CD8-positive, alpha-beta T cell (primary cell): ENCODE measurements at regions of chr19 and their contacts with region 1.

Region 1: GRCh38 chr19:14031719-14032480 is at the start of gene IL27RA:
- DNase-seq: peak; percentile 64 to 94 (median 87)
- ATAC-seq: peak; percentile 75
- H3K4me3 ChIP-seq: peak within 1 kb of the TSS; percentile 60 to 97
- H3K4me3 Mint-ChIP-seq: peak within 1 kb of the TSS; percentile 92
- H3K27ac ChIP-seq: peak within 1 kb of the TSS; percentile 80 to 95
- H3K27ac Mint-ChIP-seq: peak within 1 kb of the TSS; percentile 94
- H3K4me1 ChIP-seq: peaks cover 26% of the 10 kb centered on the region
- H3K4me1 Mint-ChIP-seq: peaks cover 32% of the 10 kb centered on the region
- H3K27me3 ChIP-seq: no peaks in the 10 kb centered on the region
- H3K27me3 Mint-ChIP-seq: no peaks in the 10 kb centered on the region
- CTCF ChIP-seq: peak; percentile 50
- total RNA-seq, gene IL27RA: 25.4 to 25.7 TPM

Region 2: DNA sequence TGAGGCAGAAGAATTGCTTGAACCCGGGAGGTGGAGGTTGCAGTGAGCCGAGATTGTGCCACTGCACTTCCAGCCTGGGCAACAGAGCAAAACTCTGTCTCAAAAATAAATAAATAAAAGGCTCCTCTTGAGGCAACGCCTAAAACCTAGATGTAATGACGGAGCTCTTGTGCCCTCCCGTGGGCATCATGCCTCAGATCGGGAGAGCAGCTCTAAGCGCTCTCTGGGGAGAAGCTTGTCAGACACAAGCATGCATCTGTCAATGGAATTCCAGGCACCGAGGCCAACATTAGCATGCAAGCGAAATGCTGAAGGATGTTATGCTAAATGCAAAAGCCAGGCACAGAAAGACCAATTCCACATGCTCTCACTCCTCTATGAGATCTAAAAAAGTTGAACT is 313.2 kb before region 1 on chr19:
- CTCF ChIA-PET with region 1: no interaction called
- POLR2A ChIA-PET with region 1: no interaction called
- intact Hi-C with region 1: no loop called
- DNase-seq: no peak
- ATAC-seq: no peak
- H3K4me3 ChIP-seq: no peak overlapping the region
- H3K4me3 Mint-ChIP-seq: no peak overlapping the region
- H3K27ac ChIP-seq: no peak overlapping the region
- H3K27ac Mint-ChIP-seq: no peak overlapping the region
- H3K4me1 ChIP-seq: no peaks in the 10 kb centered on the region
- H3K4me1 Mint-ChIP-seq: no peaks in the 10 kb centered on the region
- H3K27me3 ChIP-seq: peaks cover 0 to 2% of the 10 kb centered on the region in 2 experiments
- H3K27me3 Mint-ChIP-seq: peaks cover 18% of the 10 kb centered on the region
- CTCF ChIP-seq: no peak

Region 3: DNA sequence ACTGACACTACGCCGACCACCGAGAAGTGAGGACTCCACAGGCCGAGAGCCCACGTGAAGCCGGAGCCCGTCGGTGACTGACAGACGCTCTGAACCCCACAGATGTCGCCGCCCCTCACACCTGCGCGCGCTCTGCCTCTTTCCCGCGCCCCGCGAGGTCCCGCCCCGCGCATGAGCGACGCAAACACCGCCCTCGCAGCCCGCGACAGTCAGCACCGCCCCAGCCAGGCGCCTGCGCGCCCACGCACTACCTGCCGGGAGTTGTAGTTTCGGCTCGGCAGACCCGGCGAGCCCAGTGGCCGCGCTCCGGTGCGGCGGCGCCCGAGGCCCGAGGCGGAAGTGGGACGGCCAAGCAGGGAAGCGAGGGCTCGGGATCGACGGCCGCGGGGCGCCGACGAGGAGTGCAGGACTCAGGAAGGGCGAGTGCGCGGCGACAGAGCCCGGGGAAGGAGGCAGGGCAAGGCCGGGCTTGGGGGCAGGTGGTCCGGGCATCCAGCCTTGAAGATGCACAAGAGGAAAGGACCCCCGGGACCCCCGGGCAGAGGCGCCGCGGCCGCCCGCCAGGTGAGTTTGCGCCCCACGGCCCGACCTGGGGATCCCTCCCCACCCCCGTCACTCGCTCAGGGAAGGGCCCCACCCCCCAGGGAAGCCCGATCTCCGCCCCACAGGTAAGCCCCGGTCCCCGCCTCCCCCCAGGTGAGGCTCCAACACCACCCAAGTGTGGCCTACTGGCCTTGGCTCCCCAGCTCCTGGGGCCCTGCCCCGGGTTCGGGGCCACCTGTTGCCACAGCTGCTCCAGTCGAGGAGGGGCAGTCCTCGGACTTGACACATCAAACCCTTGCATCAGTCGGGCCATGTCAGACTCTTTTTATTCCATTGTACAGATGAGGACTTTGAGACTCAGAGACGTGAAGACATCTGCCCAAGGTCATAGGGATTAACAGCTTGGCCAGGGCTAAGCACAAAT is 125.7 kb before region 1 on chr19 and contains the starts of genes BRME1 and CC2D1A:
- CTCF ChIA-PET with region 1: interaction called, 5 read pairs
- POLR2A ChIA-PET with region 1: interaction called, 3 read pairs
- intact Hi-C with region 1: loop called in 1 of 2 experiments (anchors 1 kb)
- DNase-seq: peak; percentile 87 to 96 (median 94)
- ATAC-seq: peak; percentile 99
- H3K4me3 ChIP-seq: peak within 1 kb of the TSS; percentile 70 to 81
- H3K4me3 Mint-ChIP-seq: peak within 1 kb of the TSS; percentile 89
- H3K27ac ChIP-seq: peak within 1 kb of the TSS; percentile 57 to 59
- H3K27ac Mint-ChIP-seq: peak within 1 kb of the TSS; percentile 84
- H3K4me1 ChIP-seq: peaks cover 12% of the 10 kb centered on the region
- H3K4me1 Mint-ChIP-seq: peaks cover 14% of the 10 kb centered on the region
- H3K27me3 ChIP-seq: no peaks in the 10 kb centered on the region
- H3K27me3 Mint-ChIP-seq: no peaks in the 10 kb centered on the region
- CTCF ChIP-seq: no peak
- total RNA-seq, gene BRME1: 1.0 to 1.2 TPM
- total RNA-seq, gene CC2D1A: 11.3 to 16.0 TPM

Region 4: GRCh38 chr19:13978347-13978733 is 53.6 kb before region 1 on chr19:
- CTCF ChIA-PET with region 1: interaction called, 4 read pairs
- POLR2A ChIA-PET with region 1: interaction called, 19 read pairs
- intact Hi-C with region 1: no loop called
- DNase-seq: peak in 5 of 9 experiments; percentile 28 to 51 (median 42)
- ATAC-seq: peak; percentile 46
- H3K4me3 ChIP-seq: no peak overlapping the region
- H3K4me3 Mint-ChIP-seq: peak overlapping the region; percentile 61
- H3K27ac ChIP-seq: peak overlapping the region in 1 of 2 experiments; percentile 9
- H3K27ac Mint-ChIP-seq: peak overlapping the region; percentile 82
- H3K4me1 ChIP-seq: peaks cover 51% of the 10 kb centered on the region
- H3K4me1 Mint-ChIP-seq: peaks cover 41% of the 10 kb centered on the region
- H3K27me3 ChIP-seq: no peaks in the 10 kb centered on the region
- H3K27me3 Mint-ChIP-seq: no peaks in the 10 kb centered on the region
- CTCF ChIP-seq: no peak

Region 5: DNA sequence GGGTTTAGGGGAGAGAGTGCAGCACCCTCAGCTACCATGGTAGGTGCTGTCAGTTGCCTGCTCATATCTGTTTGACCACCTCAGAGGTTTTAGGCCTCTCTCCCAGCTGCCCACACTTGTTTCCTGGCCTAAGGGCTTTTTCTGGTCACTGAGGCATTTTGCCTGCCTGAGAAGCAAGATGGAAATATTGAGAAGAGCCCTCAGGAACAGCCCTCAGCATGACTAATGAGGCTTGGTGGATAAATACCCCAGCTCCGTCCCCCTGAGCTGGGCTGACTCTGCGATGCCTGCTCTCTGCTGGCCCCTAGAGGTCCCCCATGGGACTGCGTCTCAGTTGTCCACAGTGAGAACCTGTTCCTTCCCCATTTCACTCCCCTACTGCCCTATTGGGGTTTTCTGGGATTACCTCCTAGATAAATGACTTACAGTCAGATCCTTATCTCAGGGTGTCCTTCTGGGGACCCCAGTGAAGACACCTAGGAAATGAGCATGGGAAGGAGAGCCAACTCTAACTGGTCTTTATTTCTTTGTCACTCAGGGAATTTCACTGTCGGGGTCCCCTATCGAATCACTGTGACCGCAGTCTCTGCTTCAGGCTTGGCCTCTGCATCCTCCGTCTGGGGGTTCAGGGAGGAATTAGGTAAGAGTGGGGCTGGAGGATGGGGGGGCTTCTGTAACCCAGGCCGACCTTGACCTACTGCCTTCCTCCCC is 16.7 kb after region 1 on chr19:
- CTCF ChIA-PET with region 1: interaction called, 12 read pairs
- POLR2A ChIA-PET with region 1: interaction called, 12 read pairs
- intact Hi-C with region 1: loop called in 1 of 2 experiments (anchors 1 kb)
- DNase-seq: peak; percentile 52 to 85 (median 78)
- ATAC-seq: peak; percentile 98
- H3K4me3 ChIP-seq: no peak overlapping the region
- H3K4me3 Mint-ChIP-seq: no peak overlapping the region
- H3K27ac ChIP-seq: peak overlapping the region in 1 of 2 experiments; percentile 34
- H3K27ac Mint-ChIP-seq: peak overlapping the region; percentile 41
- H3K4me1 ChIP-seq: no peaks in the 10 kb centered on the region
- H3K4me1 Mint-ChIP-seq: peaks cover 7% of the 10 kb centered on the region
- H3K27me3 ChIP-seq: no peaks in the 10 kb centered on the region
- H3K27me3 Mint-ChIP-seq: no peaks in the 10 kb centered on the region
- CTCF ChIP-seq: peak; percentile 94

Region 6: DNA sequence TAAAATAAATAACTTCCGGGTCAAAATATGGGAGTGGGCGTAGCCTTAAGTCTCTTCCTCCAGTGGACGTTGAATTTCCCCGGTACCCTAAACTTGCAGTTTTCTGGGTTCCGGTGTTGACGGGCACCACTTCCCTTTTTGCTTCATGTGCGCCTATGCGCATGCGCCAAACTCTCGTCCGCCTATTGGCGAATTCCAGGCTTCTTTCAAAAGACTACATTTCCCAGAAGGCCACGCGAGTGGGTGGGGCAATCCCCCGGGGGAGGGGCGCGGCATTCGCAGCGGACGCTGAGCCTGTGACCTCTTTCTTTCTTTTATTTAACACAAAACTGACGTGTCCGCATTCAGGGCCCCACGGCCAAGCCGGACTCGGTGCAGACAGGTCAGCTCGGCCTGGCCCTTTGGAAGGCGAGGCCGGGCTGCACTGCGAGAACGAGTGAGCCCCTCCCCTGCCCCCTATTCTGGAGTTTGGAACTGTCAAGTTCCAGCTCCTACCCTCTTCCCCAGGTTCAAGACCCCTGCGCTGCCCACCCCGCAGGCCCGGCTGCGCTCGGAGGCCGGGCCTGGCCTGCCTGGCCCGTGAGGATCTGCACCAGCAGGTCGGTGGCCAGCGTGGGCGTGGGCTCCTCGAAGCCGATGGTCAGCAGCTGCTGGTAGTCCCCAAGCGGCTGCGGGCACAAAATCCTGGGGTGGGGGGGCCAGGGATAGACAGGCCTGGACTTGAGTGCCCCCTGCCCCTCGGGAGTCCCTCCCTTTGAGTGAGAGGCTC is 49.6 kb after region 1 on chr19:
- CTCF ChIA-PET with region 1: interaction called, 13 read pairs
- POLR2A ChIA-PET with region 1: interaction called, 7 read pairs
- intact Hi-C with region 1: no loop called
- DNase-seq: peak; percentile 98 to 100 (median 99)
- ATAC-seq: peak; percentile 93
- H3K4me3 ChIP-seq: peak overlapping the region; percentile 77 to 89
- H3K4me3 Mint-ChIP-seq: peak overlapping the region; percentile 91
- H3K27ac ChIP-seq: peak overlapping the region; percentile 60 to 83
- H3K27ac Mint-ChIP-seq: peak overlapping the region; percentile 90
- H3K4me1 ChIP-seq: peaks cover 17% of the 10 kb centered on the region
- H3K4me1 Mint-ChIP-seq: peaks cover 20% of the 10 kb centered on the region
- H3K27me3 ChIP-seq: no peaks in the 10 kb centered on the region
- H3K27me3 Mint-ChIP-seq: no peaks in the 10 kb centered on the region
- CTCF ChIP-seq: no peak